ENCODE measurements at regions of chr15 and their contacts with region 1.

Region 1: GRCh38 chr15:34367101-34368081 is at the start of gene LPCAT4:
- DNase-seq: peak; percentile 95
- H3K4me3 Mint-ChIP-seq: peak within 1 kb of the TSS; percentile 88
- H3K27ac Mint-ChIP-seq: peak within 1 kb of the TSS; percentile 96
- H3K4me1 Mint-ChIP-seq: peaks cover 57% of the 10 kb centered on the region
- H3K27me3 Mint-ChIP-seq: no peaks in the 10 kb centered on the region

Region 2: DNA sequence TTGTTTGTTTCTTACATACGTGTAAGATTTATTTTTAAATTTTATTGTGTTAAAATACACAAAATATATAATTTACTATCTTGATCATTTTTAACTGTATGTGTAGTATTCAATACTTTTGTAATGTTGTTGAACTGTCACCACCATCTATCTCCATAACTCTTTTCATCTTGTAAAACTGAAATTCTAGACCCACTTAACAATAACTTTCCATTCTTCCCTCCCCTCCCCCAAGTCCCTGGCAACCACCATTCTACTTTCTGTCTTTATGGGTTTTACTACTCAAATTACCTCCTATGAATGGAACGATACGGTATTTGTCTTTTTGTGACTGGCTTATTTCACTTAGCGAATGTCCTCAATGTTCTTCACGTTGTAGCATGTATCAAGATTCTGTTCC is 661.2 kb before region 1 on chr15:
- CTCF ChIA-PET with region 1: no interaction called
- DNase-seq: no peak
- H3K4me3 Mint-ChIP-seq: no peak overlapping the region
- H3K27ac Mint-ChIP-seq: no peak overlapping the region
- H3K4me1 Mint-ChIP-seq: no peaks in the 10 kb centered on the region
- H3K27me3 Mint-ChIP-seq: peaks cover 5% of the 10 kb centered on the region

Region 3: DNA sequence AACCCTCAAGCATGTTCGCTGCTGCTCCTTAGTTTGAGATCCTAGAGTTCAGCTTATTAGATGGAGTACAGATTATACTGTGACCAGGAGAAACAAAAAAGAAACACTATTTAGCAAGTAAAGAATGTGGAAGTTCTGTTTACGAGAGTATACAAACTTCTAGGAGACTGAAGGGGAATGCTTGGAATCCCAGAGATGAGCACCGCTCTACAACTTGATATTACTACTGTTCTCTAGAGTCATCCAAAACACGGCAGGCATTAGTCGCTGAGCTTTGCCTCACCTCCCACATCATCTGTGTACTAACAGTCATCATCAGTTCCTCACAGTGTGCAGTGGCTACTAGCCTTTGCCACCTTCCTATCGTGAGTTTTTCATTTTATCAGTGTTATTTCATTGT is 520.5 kb before region 1 on chr15:
- CTCF ChIA-PET with region 1: no interaction called
- DNase-seq: no peak
- H3K4me3 Mint-ChIP-seq: no peak overlapping the region
- H3K27ac Mint-ChIP-seq: no peak overlapping the region
- H3K4me1 Mint-ChIP-seq: no peaks in the 10 kb centered on the region
- H3K27me3 Mint-ChIP-seq: no peaks in the 10 kb centered on the region

Region 4: DNA sequence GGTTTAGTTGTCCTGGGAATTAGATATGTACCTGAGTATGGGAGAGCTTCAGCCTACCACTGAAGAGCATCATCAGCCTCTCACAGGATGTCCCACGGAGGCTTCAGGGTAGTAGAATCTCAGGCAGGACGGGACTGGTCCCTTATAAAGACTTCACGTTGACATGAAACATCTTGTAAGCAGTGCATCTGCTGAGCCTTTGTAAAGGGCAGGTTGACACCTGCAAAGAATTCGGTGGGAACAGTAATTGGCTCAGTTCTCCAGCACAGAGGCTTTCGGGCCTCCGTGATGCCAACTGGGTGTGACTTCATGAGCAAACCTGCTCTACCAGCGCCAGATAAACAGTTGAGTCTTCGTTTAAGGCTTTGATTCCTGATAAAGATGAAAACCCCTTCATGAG is 301.4 kb before region 1 on chr15:
- CTCF ChIA-PET with region 1: interaction called, 17 read pairs
- DNase-seq: no peak
- H3K4me3 Mint-ChIP-seq: no peak overlapping the region
- H3K27ac Mint-ChIP-seq: no peak overlapping the region
- H3K4me1 Mint-ChIP-seq: peaks cover 10% of the 10 kb centered on the region
- H3K27me3 Mint-ChIP-seq: no peaks in the 10 kb centered on the region

Region 5: GRCh38 chr15:34109797-34110663 is 257.4 kb before region 1 on chr15:
- CTCF ChIA-PET with region 1: interaction called, 17 read pairs
- DNase-seq: no peak
- H3K4me3 Mint-ChIP-seq: no peak overlapping the region
- H3K27ac Mint-ChIP-seq: no peak overlapping the region
- H3K4me1 Mint-ChIP-seq: peaks cover 5% of the 10 kb centered on the region
- H3K27me3 Mint-ChIP-seq: peaks cover 10% of the 10 kb centered on the region

Region 6: DNA sequence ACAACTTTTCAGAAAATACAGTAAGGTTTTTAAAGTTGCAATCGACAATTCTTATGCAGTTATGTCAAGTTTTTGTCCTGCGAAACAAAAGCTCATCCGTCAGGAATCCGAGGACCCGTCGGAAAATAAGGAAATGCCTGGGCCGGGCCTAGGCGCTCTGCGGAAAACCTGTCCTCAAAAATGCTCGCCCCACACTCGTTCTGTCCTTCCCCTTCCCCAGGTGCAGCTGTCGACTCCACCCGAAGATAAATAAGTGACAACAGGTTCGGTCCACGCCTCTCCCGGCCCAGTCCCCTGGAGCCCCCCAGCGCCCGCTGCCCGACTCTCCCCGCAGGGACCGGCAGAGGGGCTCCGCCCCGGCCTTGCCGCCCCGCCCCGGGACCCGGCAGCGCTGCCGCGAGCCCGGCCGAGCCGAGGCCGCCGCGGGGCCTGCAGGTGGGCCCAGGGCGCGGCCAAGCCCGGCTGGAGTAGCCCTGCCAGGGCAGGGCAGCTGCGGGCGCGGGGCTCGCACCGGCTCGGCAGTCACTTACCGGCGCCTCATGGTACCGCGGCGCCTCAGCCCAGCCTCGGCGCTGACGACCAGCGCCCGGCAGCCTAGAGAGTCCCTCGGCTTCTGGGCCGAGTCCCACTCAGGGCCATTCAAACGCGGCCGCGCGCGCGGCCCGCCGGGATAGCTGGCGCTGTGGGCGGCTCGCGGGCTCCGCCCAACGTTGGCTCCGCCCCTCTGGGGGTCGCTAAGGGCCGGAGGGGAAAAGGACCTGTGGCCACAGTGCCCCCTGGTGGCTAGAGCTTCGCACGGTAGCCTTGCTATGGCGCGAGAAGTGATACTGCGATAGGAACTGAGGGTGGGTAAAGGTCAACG is 157.7 kb before region 1 on chr15 and contains the start of gene KATNBL1:
- CTCF ChIA-PET with region 1: interaction called, 13 read pairs
- DNase-seq: peak; percentile 98
- H3K4me3 Mint-ChIP-seq: peak within 1 kb of the TSS; percentile 92
- H3K27ac Mint-ChIP-seq: peak within 1 kb of the TSS; percentile 92
- H3K4me1 Mint-ChIP-seq: peaks cover 17% of the 10 kb centered on the region
- H3K27me3 Mint-ChIP-seq: peaks cover 8% of the 10 kb centered on the region

Region 7: GRCh38 chr15:34241372-34242330 is 125.7 kb before region 1 on chr15:
- CTCF ChIA-PET with region 1: interaction called, 29 read pairs
- DNase-seq: peak; percentile 55
- H3K4me3 Mint-ChIP-seq: no peak overlapping the region
- H3K27ac Mint-ChIP-seq: no peak overlapping the region
- H3K4me1 Mint-ChIP-seq: peaks cover 14% of the 10 kb centered on the region
- H3K27me3 Mint-ChIP-seq: no peaks in the 10 kb centered on the region

Region 8: DNA sequence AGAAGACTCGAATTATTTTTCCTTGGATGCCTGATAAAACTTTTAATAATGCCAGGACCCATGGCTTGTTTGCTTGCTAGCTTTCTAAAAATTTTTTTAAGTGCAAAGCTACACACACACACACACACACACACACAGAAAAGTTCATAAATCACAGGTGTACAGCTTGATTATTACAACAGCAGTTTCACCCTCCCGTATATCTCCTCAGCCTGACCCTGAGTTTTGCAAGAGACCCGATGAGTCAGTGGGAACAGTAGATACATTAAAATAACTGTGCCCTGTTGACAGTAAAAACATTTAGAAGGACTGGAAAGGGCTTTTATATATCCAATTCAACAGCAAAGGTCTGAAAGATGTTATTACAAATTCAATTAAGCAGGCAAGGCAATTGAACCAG is 95.9 kb before region 1 on chr15:
- CTCF ChIA-PET with region 1: no interaction called
- DNase-seq: no peak
- H3K4me3 Mint-ChIP-seq: no peak overlapping the region
- H3K27ac Mint-ChIP-seq: peak overlapping the region; percentile 11
- H3K4me1 Mint-ChIP-seq: no peaks in the 10 kb centered on the region
- H3K27me3 Mint-ChIP-seq: no peaks in the 10 kb centered on the region

Region 9: GRCh38 chr15:34342737-34343575 is 24.4 kb before region 1 on chr15 and contains the starts of genes NOP10 and NUTM1:
- CTCF ChIA-PET with region 1: interaction called, 49 read pairs
- DNase-seq: peak; percentile 96
- H3K4me3 Mint-ChIP-seq: no peak within 1 kb of the TSS
- H3K27ac Mint-ChIP-seq: no peak within 1 kb of the TSS
- H3K4me1 Mint-ChIP-seq: peaks cover 24% of the 10 kb centered on the region
- H3K27me3 Mint-ChIP-seq: peaks cover 14% of the 10 kb centered on the region

Region 10: GRCh38 chr15:34355241-34355640 is 12.2 kb before region 1 on chr15:
- CTCF ChIA-PET with region 1: interaction called, 11 read pairs
- DNase-seq: no peak
- H3K4me3 Mint-ChIP-seq: no peak overlapping the region
- H3K27ac Mint-ChIP-seq: no peak overlapping the region
- H3K4me1 Mint-ChIP-seq: no peaks in the 10 kb centered on the region
- H3K27me3 Mint-ChIP-seq: no peaks in the 10 kb centered on the region